OCI-LY7 (cell line): ENCODE measurements at regions of chr17 and their contacts with region 1.

Region 1: GRCh38 chr17:75319904-75320691 is 30.9 kb upstream of the SLC25A19 start:
- DNase-seq: peak; percentile 94
- H3K4me3 ChIP-seq: peak overlapping the region; percentile 51
- H3K27ac ChIP-seq: peak overlapping the region; percentile 92
- H3K4me1 ChIP-seq: peaks cover 89% of the 10 kb centered on the region
- CTCF ChIP-seq: 0 out of 2 replicates have a peak, but pooled peaks have one; percentile 38

Region 2: GRCh38 chr17:75289115-75289831 is 30.8 kb before region 1 on chr17 and contains the start of gene SLC25A19:
- CTCF ChIA-PET with region 1: interaction called, 5 read pairs
- POLR2A ChIA-PET with region 1: interaction called, 16 read pairs
- intact Hi-C with region 1: loop called (anchors 1 kb)
- DNase-seq: peak; percentile 100
- H3K4me3 ChIP-seq: peak within 1 kb of the TSS; percentile 86
- H3K27ac ChIP-seq: peak within 1 kb of the TSS; percentile 80
- H3K4me1 ChIP-seq: peaks cover 52% of the 10 kb centered on the region
- CTCF ChIP-seq: peak; percentile 69
- total RNA-seq, gene SLC25A19: 113 TPM in 2 replicates

Region 3: DNA sequence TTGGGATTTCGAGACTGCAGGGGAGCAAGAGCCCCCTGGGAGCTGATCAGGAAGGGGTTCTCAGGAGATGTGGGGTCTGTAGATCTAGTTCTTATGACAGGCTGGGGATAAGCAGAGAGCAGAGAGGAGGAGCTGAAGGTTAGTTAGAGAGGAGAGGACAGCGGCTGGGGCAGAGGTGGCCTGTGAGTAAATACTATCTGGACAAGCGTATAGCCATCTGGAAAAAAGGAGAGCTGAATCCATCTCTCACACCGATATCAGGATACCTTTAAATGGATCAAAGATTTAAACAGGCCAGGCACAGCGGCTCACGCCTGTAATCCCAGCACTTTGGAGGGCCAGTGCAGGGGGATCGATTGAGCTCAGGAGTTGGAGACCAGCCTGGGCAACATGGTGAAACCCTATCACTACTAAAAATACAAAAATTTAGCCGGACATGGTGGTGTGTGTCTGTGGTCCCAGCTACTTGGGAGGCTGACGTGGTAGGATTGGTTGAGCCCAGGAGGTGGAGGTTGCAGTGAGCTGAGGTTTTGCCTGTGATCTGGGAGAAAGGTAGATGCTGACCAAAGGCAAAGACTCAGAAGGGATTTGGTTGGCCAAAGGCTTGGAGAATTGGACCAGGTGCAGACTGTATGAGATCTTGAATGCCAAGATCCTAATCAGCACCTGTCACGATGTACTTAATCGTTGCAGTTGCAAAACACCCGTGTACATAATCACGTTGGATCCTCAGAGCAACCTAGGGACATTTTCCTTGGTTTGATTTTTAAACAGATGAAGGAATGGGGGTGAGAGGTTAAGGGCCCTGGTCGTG is 11.9 kb before region 1 on chr17:
- CTCF ChIA-PET with region 1: interaction called, 3 read pairs
- POLR2A ChIA-PET with region 1: interaction called, 16 read pairs
- intact Hi-C with region 1: no loop called
- DNase-seq: no peak
- H3K4me3 ChIP-seq: no peak overlapping the region
- H3K27ac ChIP-seq: no peak overlapping the region
- H3K4me1 ChIP-seq: peaks cover 27% of the 10 kb centered on the region
- CTCF ChIP-seq: no peak

Region 4: DNA sequence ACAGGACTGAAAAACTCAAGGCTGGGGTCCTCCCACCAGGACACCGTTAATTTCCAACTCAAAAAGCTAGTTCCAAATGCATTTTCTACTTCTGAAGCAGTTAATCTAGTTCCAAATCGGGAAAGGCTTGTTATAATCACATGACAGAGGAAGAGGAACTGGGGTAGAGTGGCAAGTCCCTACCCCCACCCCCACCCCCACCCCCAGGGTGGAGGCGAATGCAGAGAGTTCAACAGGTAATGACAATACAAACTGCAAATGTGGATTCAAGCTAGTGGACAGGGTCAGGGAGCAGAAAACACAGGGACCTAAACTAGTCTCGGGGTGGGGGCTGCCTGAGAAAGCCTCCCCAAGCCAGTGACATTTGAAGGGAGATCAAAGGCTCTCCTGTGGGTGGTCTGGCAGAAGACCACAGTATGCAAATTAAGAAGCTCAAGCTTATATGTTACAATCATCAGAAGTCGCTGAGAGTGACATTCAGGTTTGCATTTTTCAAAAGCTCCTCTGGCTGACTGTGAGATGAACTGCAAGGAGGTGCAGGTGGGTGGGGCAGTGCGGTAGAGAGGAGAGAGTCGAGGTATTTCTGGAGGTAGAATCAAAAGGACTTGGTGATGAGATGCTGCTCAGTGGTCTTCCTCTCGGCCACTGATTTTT is 25.5 kb after region 1 on chr17:
- CTCF ChIA-PET with region 1: interaction called, 10 read pairs
- POLR2A ChIA-PET with region 1: interaction called, 393 read pairs
- intact Hi-C with region 1: loop called (anchors 1 kb)
- DNase-seq: peak; percentile 98
- H3K4me3 ChIP-seq: peak overlapping the region; percentile 75
- H3K27ac ChIP-seq: peak overlapping the region; percentile 94
- H3K4me1 ChIP-seq: peaks cover 85% of the 10 kb centered on the region
- CTCF ChIP-seq: peak; percentile 27; the same call in 1 of the 2 replicates

Region 5: DNA sequence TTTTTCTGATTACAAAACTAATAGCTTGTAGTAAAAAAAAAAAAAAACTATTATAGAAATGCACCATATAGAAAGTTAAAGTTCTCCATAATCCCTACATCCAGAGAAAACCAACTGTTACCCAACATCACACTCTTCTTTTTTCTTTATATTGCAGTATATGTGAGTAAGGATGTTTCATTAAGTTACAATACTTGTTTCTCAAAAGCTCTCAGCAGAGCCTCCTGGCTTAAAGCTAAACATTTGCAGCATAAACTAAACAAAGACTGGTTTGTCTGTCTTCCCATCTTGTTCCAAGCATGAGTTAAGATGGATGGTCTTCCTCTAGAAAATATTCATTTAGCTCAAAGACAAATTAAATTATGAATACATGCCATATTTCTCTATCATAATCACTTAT is 60.2 kb after region 1 on chr17:
- CTCF ChIA-PET with region 1: no interaction called
- POLR2A ChIA-PET with region 1: interaction called, 11 read pairs
- intact Hi-C with region 1: no loop called
- DNase-seq: no peak
- H3K4me3 ChIP-seq: no peak overlapping the region
- H3K27ac ChIP-seq: no peak overlapping the region
- H3K4me1 ChIP-seq: peaks cover 69% of the 10 kb centered on the region
- CTCF ChIP-seq: no peak

Region 6: GRCh38 chr17:75405365-75406221 is 85.5 kb after region 1 on chr17 and contains the start of gene GRB2:
- CTCF ChIA-PET with region 1: interaction called, 5 read pairs
- POLR2A ChIA-PET with region 1: interaction called, 10 read pairs
- intact Hi-C with region 1: loop called (anchors 1 kb)
- DNase-seq: peak; percentile 100
- H3K4me3 ChIP-seq: peak within 1 kb of the TSS; percentile 84
- H3K27ac ChIP-seq: peak within 1 kb of the TSS; percentile 81
- H3K4me1 ChIP-seq: peaks cover 62% of the 10 kb centered on the region
- CTCF ChIP-seq: no peak
- total RNA-seq, gene GRB2: 240 and 244 TPM in 2 replicates

Region 7: GRCh38 chr17:75749545-75750389 is 429.7 kb after region 1 on chr17:
- CTCF ChIA-PET with region 1: no interaction called
- POLR2A ChIA-PET with region 1: no interaction called
- intact Hi-C with region 1: no loop called
- DNase-seq: peak; percentile 92
- H3K4me3 ChIP-seq: no peak overlapping the region
- H3K27ac ChIP-seq: no peak overlapping the region
- H3K4me1 ChIP-seq: peaks cover 45% of the 10 kb centered on the region
- CTCF ChIP-seq: peak; percentile 100